T-cell (primary cell): ENCODE measurements at regions of chr16 and their contacts with region 1.

Region 1: GRCh38 chr16:82630688-82631087 is 3.9 kb downstream of the CDH13 start:
- DNase-seq: peak in 1 of 35 experiments; percentile 23
- ATAC-seq: no peak
- H3K4me3 ChIP-seq: no peak overlapping the region
- H3K4me3 Mint-ChIP-seq: no peak overlapping the region
- H3K27ac ChIP-seq: no peak overlapping the region
- H3K27ac Mint-ChIP-seq: no peak overlapping the region
- H3K4me1 ChIP-seq: peaks cover 0 to 13% of the 10 kb centered on the region in 2 experiments
- H3K4me1 Mint-ChIP-seq: peaks cover 0 to 10% (median 0%) of the 10 kb centered on the region in 3 donors
- H3K27me3 ChIP-seq: peaks cover 3 to 29% of the 10 kb centered on the region in 2 experiments
- H3K27me3 Mint-ChIP-seq: peaks cover 48 to 53% of the 10 kb centered on the region in 2 donors

Region 2: GRCh38 chr16:83215406-83216001 is 584.8 kb after region 1 on chr16:
- CTCF ChIA-PET with region 1: interaction called in 1 of 2 experiments, 10 read pairs
- POLR2A ChIA-PET with region 1: no interaction called
- DNase-seq: peak in 22 of 35 experiments; percentile 3 to 58 (median 14)
- ATAC-seq: no peak
- H3K4me3 ChIP-seq: no peak overlapping the region
- H3K4me3 Mint-ChIP-seq: no peak overlapping the region
- H3K27ac ChIP-seq: no peak overlapping the region
- H3K27ac Mint-ChIP-seq: no peak overlapping the region
- H3K4me1 ChIP-seq: no peaks in the 10 kb centered on the region
- H3K4me1 Mint-ChIP-seq: no peaks in the 10 kb centered on the region
- H3K27me3 ChIP-seq: no peaks in the 10 kb centered on the region
- H3K27me3 Mint-ChIP-seq: peaks cover 0 to 3% of the 10 kb centered on the region in 2 donors